Ascending aorta (tissue), 2 donors: ENCODE measurements at regions of chr9 and their contacts with region 1.

Region 1: DNA sequence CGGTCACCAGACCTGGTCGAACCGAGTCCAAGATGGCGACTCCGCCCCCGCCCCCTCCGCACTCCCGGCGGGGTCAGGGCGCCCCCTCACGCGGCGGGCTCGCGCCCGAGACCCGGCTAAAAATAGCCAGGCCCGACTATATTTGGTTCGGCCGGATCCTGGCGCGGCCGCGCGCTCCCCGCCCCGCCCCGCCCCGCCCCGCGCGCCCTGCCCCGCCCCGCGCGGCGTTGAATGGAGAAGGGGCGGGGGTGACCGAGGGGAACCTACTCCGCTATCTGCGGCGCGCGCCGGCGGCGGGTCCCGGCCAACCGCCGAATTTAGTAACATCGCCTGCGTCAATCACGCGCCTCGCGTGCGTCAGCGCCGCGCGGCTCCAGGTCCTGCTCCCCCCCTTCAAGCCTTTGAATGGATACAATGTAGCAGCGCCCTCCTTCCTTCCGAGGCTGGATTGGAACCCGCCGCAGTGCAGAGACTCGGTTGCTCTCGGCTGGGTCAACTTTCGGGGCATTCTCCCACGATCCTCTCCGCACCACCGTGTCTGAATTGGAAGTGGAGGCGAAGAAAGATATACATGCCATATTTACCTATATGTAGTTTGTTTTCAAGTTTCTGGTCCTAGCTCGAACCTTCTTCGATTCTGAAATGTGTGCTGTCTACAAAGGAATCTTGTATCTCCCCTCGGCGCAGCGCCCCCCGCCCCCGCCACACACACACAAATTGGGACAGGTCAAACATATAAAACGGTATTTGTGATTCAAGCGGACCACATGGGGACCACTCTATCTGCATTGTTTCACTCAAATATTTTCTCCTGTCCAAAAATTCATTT is 1.6 kb upstream of the NR4A3 start:
- DNase-seq: peak; percentile 93 to 98
- H3K4me3 ChIP-seq: peak overlapping the region; percentile 81 to 82
- H3K27ac ChIP-seq: peak overlapping the region; percentile 98 to 99
- H3K4me1 ChIP-seq: peaks cover 8 to 24% of the 10 kb centered on the region in 2 donors
- H3K27me3 ChIP-seq: no peaks in the 10 kb centered on the region
- CTCF ChIP-seq: no peak

Region 2: GRCh38 chr9:98791147-98792095 is 1028.6 kb before region 1 on chr9:
- intact Hi-C with region 1: loop called (anchors 5 kb)
- DNase-seq: peak; percentile 63 to 95
- H3K4me3 ChIP-seq: no peak overlapping the region
- H3K27ac ChIP-seq: peak overlapping the region; percentile 52 to 55
- H3K4me1 ChIP-seq: peaks cover 0 to 18% of the 10 kb centered on the region in 2 donors
- H3K27me3 ChIP-seq: no peaks in the 10 kb centered on the region
- CTCF ChIP-seq: peak; percentile 98 to 99 (median 99)

Region 3: DNA sequence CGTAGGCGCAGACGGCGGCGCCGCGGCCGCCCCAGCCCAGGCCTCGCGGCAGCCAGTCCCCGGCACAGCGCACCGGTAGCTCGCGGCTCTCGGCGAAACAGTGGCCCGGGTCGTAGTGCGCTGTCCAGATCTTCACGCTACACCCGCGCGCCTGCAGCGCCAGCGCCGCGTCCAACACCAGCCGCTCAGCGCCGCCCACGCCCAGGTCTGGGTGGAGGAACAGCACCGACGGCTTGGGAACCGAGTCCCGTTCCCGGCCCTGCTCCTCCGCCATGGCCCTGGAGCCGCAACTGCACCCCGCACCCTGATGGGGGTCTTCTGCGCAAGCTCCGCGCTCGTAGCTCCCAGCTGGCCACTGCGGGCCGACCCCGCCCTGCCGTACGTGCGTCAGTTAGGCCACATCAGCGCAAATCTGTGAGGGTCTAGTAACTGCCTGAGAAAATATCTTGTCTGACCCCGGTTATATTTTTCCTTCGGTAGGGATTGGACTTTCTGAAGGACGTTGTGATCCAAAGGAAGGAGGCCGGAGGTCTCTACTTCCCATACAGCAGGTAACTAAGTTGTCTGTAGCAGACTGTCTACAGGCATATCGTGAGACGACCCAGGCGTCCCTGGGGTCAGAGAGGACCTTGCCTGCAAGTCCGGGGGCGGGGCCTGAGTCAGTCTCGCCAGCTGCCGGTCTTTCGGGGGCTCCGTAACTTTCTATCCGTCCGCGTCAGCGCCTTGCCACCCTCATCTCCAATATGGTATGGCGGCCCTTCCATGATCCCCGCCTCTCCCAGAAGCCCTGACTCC is 598.3 kb before region 1 on chr9 and contains the starts of genes ALG2 and SEC61B:
- intact Hi-C with region 1: loop called (anchors 2 kb)
- DNase-seq: peak; percentile 70 to 96
- H3K4me3 ChIP-seq: peak within 1 kb of the TSS; percentile 94 to 99
- H3K27ac ChIP-seq: peak within 1 kb of the TSS; percentile 88 to 93
- H3K4me1 ChIP-seq: peaks cover 13 to 28% of the 10 kb centered on the region in 2 donors
- H3K27me3 ChIP-seq: no peaks in the 10 kb centered on the region
- CTCF ChIP-seq: peak in 1 of 3 experiments; percentile 13
- total RNA-seq, gene ALG2: 17.1 TPM
- total RNA-seq, gene SEC61B: 88.7 TPM

Region 4: GRCh38 chr9:99445371-99445891 is 374.6 kb before region 1 on chr9:
- intact Hi-C with region 1: loop called (anchors 2 kb)
- DNase-seq: peak in 1 of 2 donors; percentile 81
- H3K4me3 ChIP-seq: no peak overlapping the region
- H3K27ac ChIP-seq: peak overlapping the region; percentile 46 to 55
- H3K4me1 ChIP-seq: no peaks in the 10 kb centered on the region
- H3K27me3 ChIP-seq: no peaks in the 10 kb centered on the region
- CTCF ChIP-seq: no peak

Region 5: GRCh38 chr9:99752417-99753109 is 67.5 kb before region 1 on chr9:
- intact Hi-C with region 1: no loop called
- DNase-seq: no peak
- H3K4me3 ChIP-seq: no peak overlapping the region
- H3K27ac ChIP-seq: no peak overlapping the region
- H3K4me1 ChIP-seq: no peaks in the 10 kb centered on the region
- H3K27me3 ChIP-seq: no peaks in the 10 kb centered on the region
- CTCF ChIP-seq: no peak

Region 6: DNA sequence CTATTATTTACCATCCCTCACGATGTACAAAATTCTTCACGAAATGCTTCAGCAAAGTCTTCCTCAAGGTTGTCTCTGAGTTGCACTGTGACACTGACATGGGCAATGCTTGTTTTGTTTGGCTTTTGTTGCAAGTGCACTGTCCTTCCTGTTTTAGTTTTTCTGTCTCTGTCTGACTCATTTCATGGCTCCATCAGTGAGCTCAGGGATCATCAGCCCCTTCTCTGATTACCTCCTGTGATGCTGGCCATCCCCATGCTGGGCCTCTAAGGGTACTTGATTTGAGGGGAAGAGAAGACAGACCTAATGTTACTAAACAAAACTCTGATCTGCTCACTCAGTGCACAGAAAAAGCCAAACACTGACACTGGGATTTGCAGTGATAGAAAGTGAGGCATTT is 48.8 kb after region 1 on chr9:
- intact Hi-C with region 1: no loop called
- DNase-seq: no peak
- H3K4me3 ChIP-seq: no peak overlapping the region
- H3K27ac ChIP-seq: no peak overlapping the region
- H3K4me1 ChIP-seq: no peaks in the 10 kb centered on the region
- H3K27me3 ChIP-seq: no peaks in the 10 kb centered on the region
- CTCF ChIP-seq: no peak

Region 7: GRCh38 chr9:100098887-100099721 is 279.0 kb after region 1 on chr9 and contains the starts of genes ERP44 and INVS:
- intact Hi-C with region 1: loop called (anchors 2 kb)
- DNase-seq: peak; percentile 98 to 100
- H3K4me3 ChIP-seq: peak within 1 kb of the TSS; percentile 62 to 77
- H3K27ac ChIP-seq: peak within 1 kb of the TSS; percentile 79 to 81
- H3K4me1 ChIP-seq: peaks cover 0 to 16% of the 10 kb centered on the region in 2 donors
- H3K27me3 ChIP-seq: no peaks in the 10 kb centered on the region
- CTCF ChIP-seq: no peak
- total RNA-seq, gene ERP44: 10.7 TPM
- total RNA-seq, gene INVS: 8.5 TPM

Region 8: DNA sequence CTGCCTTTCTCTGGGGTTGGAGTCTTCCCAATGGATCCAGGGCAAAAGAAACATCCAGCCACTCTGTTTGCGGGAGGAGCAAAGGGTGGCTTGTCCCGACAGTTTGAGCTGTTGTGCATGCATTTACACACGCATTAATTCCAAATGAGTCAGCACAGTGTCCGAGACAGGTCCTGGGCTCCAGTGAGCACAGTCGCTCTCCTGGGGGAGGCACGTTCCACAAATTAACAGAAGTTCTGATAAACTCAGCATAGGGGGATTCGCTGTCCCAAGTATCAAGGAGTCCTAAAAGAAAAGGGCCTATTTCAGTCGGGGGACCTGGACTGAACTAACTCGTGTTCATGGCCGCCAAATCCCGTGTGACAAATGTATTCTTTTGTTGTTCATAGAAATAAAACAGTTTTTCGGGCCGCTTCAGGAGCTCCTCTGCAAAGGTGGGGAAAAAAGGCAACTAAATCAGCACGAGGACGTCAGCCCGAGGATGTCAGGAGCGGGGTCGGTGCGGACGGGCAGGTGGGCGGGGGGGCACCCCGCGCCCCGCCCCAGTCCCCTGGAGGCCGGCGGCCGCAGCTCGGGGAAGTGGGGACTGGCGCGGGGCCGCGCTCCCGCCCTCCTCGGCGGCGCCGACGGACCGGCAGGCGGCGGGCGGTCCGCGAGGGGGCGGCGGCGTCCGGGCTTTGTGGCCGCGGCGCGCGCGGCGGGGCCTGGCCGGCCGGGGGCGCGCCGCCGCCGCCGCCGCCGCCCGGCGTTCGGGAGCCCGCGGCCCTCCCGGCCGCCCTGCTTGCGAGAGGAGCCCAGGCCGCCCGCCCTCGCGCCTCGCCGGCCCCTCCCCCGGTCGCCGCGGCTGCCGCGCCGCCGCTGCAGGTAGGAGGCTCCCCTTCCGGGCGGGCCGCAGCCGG is 606.7 kb after region 1 on chr9 and contains the start of gene MSANTD3:
- intact Hi-C with region 1: loop called (anchors 2 kb)
- DNase-seq: peak in 1 of 2 donors; percentile 78
- H3K4me3 ChIP-seq: peak within 1 kb of the TSS; percentile 91 to 99
- H3K27ac ChIP-seq: peak within 1 kb of the TSS; percentile 89 to 94
- H3K4me1 ChIP-seq: peaks cover 0 to 26% of the 10 kb centered on the region in 2 donors
- H3K27me3 ChIP-seq: no peaks in the 10 kb centered on the region
- CTCF ChIP-seq: peak in 1 of 3 experiments; percentile 60
- total RNA-seq, gene MSANTD3: 2.8 TPM